ENCODE measurements at regions of chr1 and their contacts with region 1.

Region 1: GRCh38 chr1:109687616-109688499 is at the start of gene GSTM1:
- DNase-seq: peak in 5 of 9 donors; percentile 74 to 89 (median 82)
- ATAC-seq: no peak
- H3K4me3 ChIP-seq: no peak within 1 kb of the TSS
- H3K4me3 Mint-ChIP-seq: peak within 1 kb of the TSS in 7 of 10 donors; percentile 81 to 99 (median 90)
- H3K27ac ChIP-seq: peak within 1 kb of the TSS; percentile 70
- H3K27ac Mint-ChIP-seq: peak within 1 kb of the TSS in 6 of 9 donors; percentile 88 to 96 (median 94)
- H3K4me1 ChIP-seq: no peaks in the 10 kb centered on the region
- H3K4me1 Mint-ChIP-seq: peaks cover 0 to 27% (median 8%) of the 10 kb centered on the region in 7 donors
- H3K27me3 ChIP-seq: no peaks in the 10 kb centered on the region
- H3K27me3 Mint-ChIP-seq: no peaks in the 10 kb centered on the region
- total RNA-seq, gene GSTM1: 45.9 to 83.6 TPM in 2 of 5 experiments, not detected in the others

Region 2: GRCh38 chr1:108316545-108316944 is 1371.3 kb before region 1 on chr1:
- CTCF ChIA-PET with region 1: no interaction called
- POLR2A ChIA-PET with region 1: no interaction called
- intact Hi-C with region 1: no loop called
- DNase-seq: no peak
- ATAC-seq: no peak
- H3K4me3 ChIP-seq: no peak overlapping the region
- H3K4me3 Mint-ChIP-seq: no peak overlapping the region
- H3K27ac ChIP-seq: no peak overlapping the region
- H3K27ac Mint-ChIP-seq: no peak overlapping the region
- H3K4me1 ChIP-seq: no peaks in the 10 kb centered on the region
- H3K4me1 Mint-ChIP-seq: no peaks in the 10 kb centered on the region
- H3K27me3 ChIP-seq: no peaks in the 10 kb centered on the region
- H3K27me3 Mint-ChIP-seq: peaks cover 21 to 39% (median 30%) of the 10 kb centered on the region in 5 donors

Region 3: GRCh38 chr1:109739738-109740660 is 52.1 kb after region 1 on chr1:
- CTCF ChIA-PET with region 1: no interaction called
- POLR2A ChIA-PET with region 1: no interaction called
- intact Hi-C with region 1: loop called in 1 of 2 experiments (anchors 2 kb)
- DNase-seq: peak; percentile 73 to 87 (median 85)
- ATAC-seq: peak; percentile 99
- H3K4me3 ChIP-seq: peak overlapping the region; percentile 70
- H3K4me3 Mint-ChIP-seq: peak overlapping the region; percentile 71 to 93 (median 87)
- H3K27ac ChIP-seq: peak overlapping the region; percentile 81
- H3K27ac Mint-ChIP-seq: peak overlapping the region; percentile 17 to 95 (median 72)
- H3K4me1 ChIP-seq: peaks cover 0 to 11% of the 10 kb centered on the region in 2 donors
- H3K4me1 Mint-ChIP-seq: peaks cover 3 to 21% (median 13%) of the 10 kb centered on the region in 7 donors
- H3K27me3 ChIP-seq: no peaks in the 10 kb centered on the region
- H3K27me3 Mint-ChIP-seq: peaks cover 0 to 51% (median 0%) of the 10 kb centered on the region in 5 donors

Measured in naive thymus-derived CD4-positive, alpha-beta T cell (primary cell).